CD14-positive monocyte (primary cell): ENCODE measurements at regions of chr16 and their contacts with region 1.

Region 1: DNA sequence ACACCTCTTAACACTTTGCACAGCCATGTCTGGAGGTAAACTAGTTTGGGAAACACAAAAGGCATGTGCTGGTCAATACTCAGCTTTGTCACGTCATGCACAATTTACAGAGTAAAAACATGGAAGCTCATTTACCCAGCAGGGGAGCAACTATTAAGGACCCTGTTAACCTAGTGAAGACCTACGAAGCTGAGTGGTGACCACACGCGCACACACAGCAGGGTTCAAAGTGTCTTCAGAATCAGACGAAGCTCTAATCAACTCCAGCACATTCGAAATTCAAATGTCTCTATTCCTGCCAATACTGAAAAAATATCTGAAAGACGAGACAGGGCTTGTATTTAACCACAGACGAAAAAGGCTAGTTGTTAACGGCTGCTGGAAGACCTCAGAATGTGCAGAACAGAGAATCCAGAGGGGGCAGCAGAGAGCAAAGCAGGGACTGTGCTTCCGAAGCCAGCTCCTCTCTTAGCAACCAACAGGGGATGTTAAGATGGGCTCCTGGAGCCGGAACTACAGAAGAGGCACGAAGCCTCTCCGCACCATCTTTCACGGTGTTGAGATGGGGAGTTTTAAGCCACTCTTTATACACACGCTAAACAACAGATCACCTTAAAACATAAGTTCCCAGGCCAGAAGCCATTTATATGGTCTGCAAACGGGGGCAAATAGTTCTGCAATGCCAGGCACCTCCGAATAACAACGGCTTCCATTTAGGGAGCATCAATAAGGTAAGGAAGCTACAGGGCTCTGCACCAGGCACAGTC is 45.7 kb downstream of the CMTM4 start:
- DNase-seq: peak; percentile 69 to 82 (median 78)
- H3K4me3 ChIP-seq: peak overlapping the region in 2 of 3 experiments; percentile 5 to 48
- H3K4me3 Mint-ChIP-seq: peak overlapping the region; percentile 67 to 87
- H3K27ac ChIP-seq: no peak overlapping the region
- H3K27ac Mint-ChIP-seq: peak overlapping the region in 5 of 7 donors; percentile 11 to 81 (median 45)
- H3K4me1 ChIP-seq: peaks cover 46 to 48% of the 10 kb centered on the region in 2 donors
- H3K4me1 Mint-ChIP-seq: peaks cover 49% of the 10 kb centered on the region
- H3K27me3 ChIP-seq: no peaks in the 10 kb centered on the region
- H3K27me3 Mint-ChIP-seq: peaks cover 0 to 1% (median 0%) of the 10 kb centered on the region in 3 donors
- CTCF ChIP-seq: peak; percentile 96

Region 2: GRCh38 chr16:66608241-66609138 is 42.4 kb before region 1 on chr16:
- intact Hi-C with region 1: no loop called
- DNase-seq: peak; percentile 47 to 68 (median 65)
- H3K4me3 ChIP-seq: peak overlapping the region in 1 of 3 experiments; percentile 11
- H3K4me3 Mint-ChIP-seq: peak overlapping the region in 1 of 2 donors; percentile 16
- H3K27ac ChIP-seq: peak overlapping the region; percentile 39 to 40
- H3K27ac Mint-ChIP-seq: peak overlapping the region; percentile 21 to 87 (median 71)
- H3K4me1 ChIP-seq: peaks cover 42 to 45% of the 10 kb centered on the region in 2 donors
- H3K4me1 Mint-ChIP-seq: peaks cover 41% of the 10 kb centered on the region
- H3K27me3 ChIP-seq: no peaks in the 10 kb centered on the region
- H3K27me3 Mint-ChIP-seq: peaks cover 6 to 9% (median 7%) of the 10 kb centered on the region in 3 donors
- CTCF ChIP-seq: peak; percentile 72

Region 3: GRCh38 chr16:66696669-66697630 is 46.1 kb after region 1 on chr16 and contains the start of gene CMTM4:
- intact Hi-C with region 1: loop called in 1 of 2 experiments (anchors 5 kb)
- DNase-seq: peak; percentile 67 to 82 (median 70)
- H3K4me3 ChIP-seq: peak within 1 kb of the TSS; percentile 66 to 92 (median 86)
- H3K4me3 Mint-ChIP-seq: peak within 1 kb of the TSS; percentile 91 to 93
- H3K27ac ChIP-seq: peak within 1 kb of the TSS; percentile 21 to 58
- H3K27ac Mint-ChIP-seq: peak within 1 kb of the TSS; percentile 59 to 88 (median 80)
- H3K4me1 ChIP-seq: peaks cover 74 to 81% of the 10 kb centered on the region in 2 donors
- H3K4me1 Mint-ChIP-seq: peaks cover 74% of the 10 kb centered on the region
- H3K27me3 ChIP-seq: no peaks in the 10 kb centered on the region
- H3K27me3 Mint-ChIP-seq: peaks cover 0 to 2% (median 0%) of the 10 kb centered on the region in 3 donors
- CTCF ChIP-seq: no peak
- polyA plus RNA-seq, gene CMTM4: 0.41 to 21.2 (median 0.45) TPM

Region 4: DNA sequence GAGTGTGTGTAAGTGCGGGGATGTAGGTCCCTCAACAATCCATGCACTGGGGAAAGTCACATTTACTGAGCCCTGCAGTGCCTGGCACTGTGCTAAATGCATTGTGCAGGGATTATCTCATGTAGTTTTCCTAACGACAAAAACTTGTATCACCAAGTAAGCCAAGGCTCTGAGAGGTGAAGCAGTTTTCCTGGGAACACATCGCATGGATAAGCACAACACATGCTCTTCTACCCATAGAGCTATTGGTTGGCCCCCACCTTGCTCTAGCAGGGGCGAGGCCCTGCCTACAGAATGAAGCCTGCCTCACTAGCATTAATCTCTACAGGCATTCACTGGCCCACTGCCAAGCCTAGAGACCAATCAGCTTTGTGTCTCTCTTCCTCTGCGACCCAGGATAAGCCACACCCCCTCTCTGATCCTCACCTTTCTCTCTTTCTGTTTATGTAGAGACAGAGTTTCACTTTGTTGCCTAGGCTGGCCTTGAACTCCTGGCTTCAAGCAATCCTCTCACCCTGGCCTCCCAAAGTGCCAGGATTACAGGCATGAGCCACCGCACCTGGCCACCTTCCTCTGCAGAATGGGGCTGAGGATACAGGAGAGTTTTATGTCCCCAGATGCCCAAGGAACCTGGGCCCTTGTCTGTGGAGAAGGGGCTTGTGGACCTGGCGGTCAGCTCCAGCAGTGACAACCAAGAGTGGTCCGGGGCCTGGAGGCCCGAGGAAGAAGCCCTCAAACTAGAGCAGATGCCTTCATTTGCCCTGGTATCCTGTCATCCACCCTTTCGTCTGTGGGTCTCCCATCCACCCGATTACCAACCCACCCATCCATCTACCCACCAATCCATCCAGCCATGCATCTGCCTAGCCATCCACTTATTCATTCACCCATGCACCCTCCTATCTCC is 255.0 kb after region 1 on chr16:
- intact Hi-C with region 1: no loop called
- DNase-seq: no peak
- H3K4me3 ChIP-seq: no peak overlapping the region
- H3K4me3 Mint-ChIP-seq: no peak overlapping the region
- H3K27ac ChIP-seq: no peak overlapping the region
- H3K27ac Mint-ChIP-seq: peak overlapping the region in 1 of 7 donors; percentile 87
- H3K4me1 ChIP-seq: no peaks in the 10 kb centered on the region
- H3K4me1 Mint-ChIP-seq: no peaks in the 10 kb centered on the region
- H3K27me3 ChIP-seq: no peaks in the 10 kb centered on the region
- H3K27me3 Mint-ChIP-seq: peaks cover 6 to 12% (median 12%) of the 10 kb centered on the region in 3 donors
- CTCF ChIP-seq: no peak